T-cell (primary cell): ENCODE measurements at regions of chr6 and their contacts with region 1.

Region 1: DNA sequence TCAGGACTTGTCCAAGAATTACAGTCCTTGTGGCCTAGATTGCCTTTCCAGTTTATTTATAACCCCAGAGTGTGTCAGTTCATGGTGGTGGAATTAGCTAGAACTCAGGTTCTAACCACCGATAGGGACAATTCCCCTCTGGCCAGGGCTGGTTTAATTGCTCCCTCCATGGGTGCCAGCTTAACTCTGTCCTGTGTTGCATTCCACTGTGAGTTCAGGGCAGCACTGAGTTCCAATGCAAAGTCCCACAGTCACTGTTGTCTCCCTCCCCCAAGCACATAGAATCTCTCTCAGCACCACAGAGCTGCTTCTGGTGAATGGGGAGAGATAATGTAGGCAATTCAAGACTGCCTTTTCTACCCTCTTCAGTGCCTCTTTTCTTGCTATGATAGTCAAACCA is 82.5 kb upstream of the TNFRSF21 start:
- DNase-seq: no peak
- ATAC-seq: no peak
- H3K4me3 ChIP-seq: no peak overlapping the region
- H3K4me3 Mint-ChIP-seq: no peak overlapping the region
- H3K27ac ChIP-seq: no peak overlapping the region
- H3K27ac Mint-ChIP-seq: no peak overlapping the region
- H3K4me1 ChIP-seq: no peaks in the 10 kb centered on the region
- H3K4me1 Mint-ChIP-seq: no peaks in the 10 kb centered on the region
- H3K27me3 ChIP-seq: peaks cover 0 to 11% of the 10 kb centered on the region in 2 experiments
- H3K27me3 Mint-ChIP-seq: peaks cover 3 to 7% of the 10 kb centered on the region in 2 donors

Region 2: GRCh38 chr6:47344022-47344421 is 48.2 kb before region 1 on chr6:
- CTCF ChIA-PET with region 1: no interaction called
- POLR2A ChIA-PET with region 1: no interaction called
- DNase-seq: no peak
- ATAC-seq: no peak
- H3K4me3 ChIP-seq: no peak overlapping the region
- H3K4me3 Mint-ChIP-seq: no peak overlapping the region
- H3K27ac ChIP-seq: no peak overlapping the region
- H3K27ac Mint-ChIP-seq: no peak overlapping the region
- H3K4me1 ChIP-seq: no peaks in the 10 kb centered on the region
- H3K4me1 Mint-ChIP-seq: no peaks in the 10 kb centered on the region
- H3K27me3 ChIP-seq: no peaks in the 10 kb centered on the region
- H3K27me3 Mint-ChIP-seq: peaks cover 2 to 7% of the 10 kb centered on the region in 2 donors

Region 3: DNA sequence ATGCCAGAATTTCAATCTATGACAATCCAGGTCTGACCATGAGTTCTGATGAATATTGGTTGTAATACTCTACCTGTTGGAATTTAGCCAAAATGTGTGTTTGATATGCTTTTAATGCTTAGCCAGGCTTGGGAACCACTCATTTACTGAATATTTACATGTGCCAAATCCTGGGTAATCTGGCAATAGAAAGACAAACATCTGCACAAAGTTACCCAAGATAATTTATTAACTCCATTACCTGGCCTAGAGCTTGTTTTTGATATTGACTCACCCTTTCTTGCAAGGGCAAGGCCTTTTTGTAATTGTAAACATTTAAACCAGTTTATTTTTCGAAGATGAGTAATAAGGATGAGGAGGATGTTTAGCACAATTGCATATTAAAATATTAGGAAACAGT is 71.8 kb after region 1 on chr6:
- CTCF ChIA-PET with region 1: interaction called in 1 of 2 experiments, 10 read pairs
- POLR2A ChIA-PET with region 1: no interaction called
- DNase-seq: no peak
- ATAC-seq: no peak
- H3K4me3 ChIP-seq: no peak overlapping the region
- H3K4me3 Mint-ChIP-seq: no peak overlapping the region
- H3K27ac ChIP-seq: no peak overlapping the region
- H3K27ac Mint-ChIP-seq: no peak overlapping the region
- H3K4me1 ChIP-seq: no peaks in the 10 kb centered on the region
- H3K4me1 Mint-ChIP-seq: no peaks in the 10 kb centered on the region
- H3K27me3 ChIP-seq: peaks cover 0 to 5% of the 10 kb centered on the region in 2 experiments
- H3K27me3 Mint-ChIP-seq: peaks cover 0 to 2% of the 10 kb centered on the region in 2 donors